Dorsolateral prefrontal cortex (tissue), 120 donors: ENCODE measurements at regions of chr3 and their contacts with region 1.

Region 1: DNA sequence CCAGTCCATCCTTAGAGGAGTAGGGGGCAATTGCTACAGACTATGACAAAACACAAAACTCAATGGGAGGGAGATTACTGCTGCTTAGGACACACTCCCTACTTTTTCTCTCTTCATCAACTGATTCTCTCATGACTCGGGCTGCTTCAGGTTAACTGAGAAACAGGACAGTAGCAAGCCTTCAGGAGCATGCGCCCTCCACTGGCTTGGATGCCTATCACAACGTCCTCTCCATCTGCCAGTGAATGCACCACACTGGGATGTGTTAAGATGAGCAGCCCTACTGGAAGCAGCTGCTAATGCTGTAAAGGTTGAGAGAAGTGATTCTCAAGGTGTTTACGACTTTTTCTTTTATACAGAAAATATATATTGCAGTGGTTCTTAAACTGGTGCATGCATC is 542.3 kb downstream of the EDEM1 start:
- DNase-seq: no peak
- H3K4me3 ChIP-seq: no peak overlapping the region
- H3K27ac ChIP-seq: no peak overlapping the region
- H3K27me3 ChIP-seq: peaks cover 0 to 5% (median 0%) of the 10 kb centered on the region in 45 donors
- CTCF ChIP-seq: no peak

Region 2: GRCh38 chr3:5426094-5426883 is 303.6 kb before region 1 on chr3:
- intact Hi-C with region 1: loop called in 1 of 2 experiments (anchors 10 kb)
- DNase-seq: peak; percentile 42 to 88 (median 85)
- H3K4me3 ChIP-seq: peak overlapping the region in 30 of 59 donors; percentile 2 to 44 (median 28)
- H3K27ac ChIP-seq: peak overlapping the region in 13 of 59 donors; percentile 5 to 63 (median 37)
- H3K27me3 ChIP-seq: no peaks in the 10 kb centered on the region
- CTCF ChIP-seq: peak; percentile 60 to 89 (median 82)

Region 3: DNA sequence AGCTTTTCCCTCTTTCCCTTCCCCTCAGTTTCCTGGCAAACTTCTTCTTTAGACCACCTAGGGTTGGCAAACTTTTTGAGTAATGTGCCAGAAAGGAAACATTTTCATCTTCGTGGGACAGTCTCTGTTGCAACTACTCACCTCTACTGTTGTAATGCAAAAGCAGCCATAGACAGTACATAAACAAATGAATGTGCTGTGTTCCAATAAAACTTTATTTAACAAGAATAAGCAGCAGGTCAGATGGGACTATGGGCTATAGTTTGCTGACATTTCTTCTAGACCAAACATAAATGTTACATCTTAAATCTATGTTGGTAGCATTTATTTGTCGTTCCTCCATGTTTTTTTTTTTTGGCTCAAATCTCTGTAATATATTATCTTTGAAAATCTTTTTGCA is 10.1 kb after region 1 on chr3:
- intact Hi-C with region 1: no loop called
- DNase-seq: no peak
- H3K4me3 ChIP-seq: no peak overlapping the region
- H3K27ac ChIP-seq: no peak overlapping the region
- H3K27me3 ChIP-seq: peaks cover 0 to 6% (median 0%) of the 10 kb centered on the region in 45 donors
- CTCF ChIP-seq: no peak